Activated CD4-positive, alpha-beta T cell treated with anti-CD3 and anti-CD28 coated beads, Interleukin-2, amount 10 ng/mL, durations not matched to agents 24 days and 14 days (primary cell): ENCODE measurements at regions of chr7 and their contacts with region 1.

Region 1: DNA sequence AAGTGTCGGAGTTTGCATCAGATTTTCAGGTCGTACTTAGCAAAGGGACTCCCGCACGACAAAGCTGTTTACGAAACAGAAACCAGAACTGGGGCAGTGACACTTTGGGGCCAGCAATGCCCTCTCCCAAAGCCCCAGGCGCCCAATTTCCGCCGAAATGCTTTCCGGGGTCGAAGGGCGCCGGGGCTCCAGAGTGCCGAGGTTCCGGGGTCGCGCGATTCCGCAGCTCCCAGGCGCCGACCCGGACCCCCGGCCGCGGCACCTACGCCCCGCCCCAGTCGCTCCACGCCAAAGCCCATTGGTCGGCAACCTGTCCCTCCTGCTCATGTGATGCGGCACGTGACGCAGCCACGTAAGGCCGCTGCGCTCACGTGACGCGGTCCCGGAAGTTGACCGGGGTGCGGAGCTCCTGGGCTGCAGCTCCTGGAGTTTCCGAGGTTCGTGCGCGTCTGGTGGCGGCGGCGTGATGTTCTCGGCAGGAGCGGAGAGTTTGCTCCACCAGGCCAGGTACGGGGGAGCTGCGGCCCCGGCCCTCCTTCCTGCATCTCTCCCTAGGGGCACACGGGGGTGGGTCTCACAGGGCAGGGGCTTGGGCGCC is at the start of gene AP5Z1:
- DNase-seq: peak; percentile 98
- H3K4me3 Mint-ChIP-seq: peak within 1 kb of the TSS; percentile 97
- H3K27ac Mint-ChIP-seq: peak within 1 kb of the TSS; percentile 97
- H3K4me1 Mint-ChIP-seq: peaks cover 36% of the 10 kb centered on the region
- H3K27me3 Mint-ChIP-seq: no peaks in the 10 kb centered on the region
- total RNA-seq, gene AP5Z1: 42.2 and 44.4 TPM in 2 replicates

Region 2: DNA sequence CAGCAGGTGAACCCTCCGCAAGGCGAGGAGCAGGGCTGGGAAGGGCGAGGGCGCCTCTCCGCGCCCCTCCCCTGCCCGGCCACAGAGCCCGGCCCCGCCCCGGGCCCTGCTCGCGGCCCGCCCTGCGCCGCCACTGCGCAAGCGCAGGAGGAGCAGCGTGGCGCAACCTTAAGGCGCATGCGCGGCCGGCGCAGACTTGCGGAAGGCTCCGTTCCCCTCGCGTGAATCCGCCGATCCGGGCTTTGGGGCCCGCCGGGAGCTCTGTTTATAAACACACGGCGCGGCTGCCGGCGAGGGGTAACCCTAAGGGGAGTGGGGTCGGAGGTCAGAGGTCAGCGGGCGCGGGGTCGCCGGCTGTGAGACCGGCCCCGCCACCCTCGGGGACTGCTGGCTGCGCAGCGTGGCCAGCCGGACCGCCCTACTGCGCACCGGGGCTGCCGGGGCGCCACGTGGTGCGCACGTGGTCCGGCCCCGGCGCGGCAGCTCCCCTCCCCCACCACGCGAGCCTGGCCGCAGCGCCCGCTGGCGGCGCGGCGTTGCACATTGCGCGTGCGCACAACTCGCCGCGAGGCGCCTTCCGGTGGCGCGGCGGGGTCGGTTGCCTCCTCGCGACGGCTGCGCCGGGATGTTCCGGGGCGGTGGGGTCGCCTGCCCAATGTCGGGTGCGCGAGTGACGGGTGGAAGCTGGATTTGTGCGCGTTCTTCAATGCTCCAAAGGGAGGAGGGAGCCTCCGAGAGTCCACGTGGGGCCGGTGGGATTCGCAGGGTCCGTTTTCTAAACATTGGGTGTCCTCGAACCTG is 133.5 kb before region 1 on chr7:
- intact Hi-C with region 1: loop called (anchors 1 kb)
- DNase-seq: peak; percentile 99
- H3K4me3 Mint-ChIP-seq: peak overlapping the region; percentile 95
- H3K27ac Mint-ChIP-seq: peak overlapping the region; percentile 95
- H3K4me1 Mint-ChIP-seq: peaks cover 15% of the 10 kb centered on the region
- H3K27me3 Mint-ChIP-seq: no peaks in the 10 kb centered on the region

Region 3: DNA sequence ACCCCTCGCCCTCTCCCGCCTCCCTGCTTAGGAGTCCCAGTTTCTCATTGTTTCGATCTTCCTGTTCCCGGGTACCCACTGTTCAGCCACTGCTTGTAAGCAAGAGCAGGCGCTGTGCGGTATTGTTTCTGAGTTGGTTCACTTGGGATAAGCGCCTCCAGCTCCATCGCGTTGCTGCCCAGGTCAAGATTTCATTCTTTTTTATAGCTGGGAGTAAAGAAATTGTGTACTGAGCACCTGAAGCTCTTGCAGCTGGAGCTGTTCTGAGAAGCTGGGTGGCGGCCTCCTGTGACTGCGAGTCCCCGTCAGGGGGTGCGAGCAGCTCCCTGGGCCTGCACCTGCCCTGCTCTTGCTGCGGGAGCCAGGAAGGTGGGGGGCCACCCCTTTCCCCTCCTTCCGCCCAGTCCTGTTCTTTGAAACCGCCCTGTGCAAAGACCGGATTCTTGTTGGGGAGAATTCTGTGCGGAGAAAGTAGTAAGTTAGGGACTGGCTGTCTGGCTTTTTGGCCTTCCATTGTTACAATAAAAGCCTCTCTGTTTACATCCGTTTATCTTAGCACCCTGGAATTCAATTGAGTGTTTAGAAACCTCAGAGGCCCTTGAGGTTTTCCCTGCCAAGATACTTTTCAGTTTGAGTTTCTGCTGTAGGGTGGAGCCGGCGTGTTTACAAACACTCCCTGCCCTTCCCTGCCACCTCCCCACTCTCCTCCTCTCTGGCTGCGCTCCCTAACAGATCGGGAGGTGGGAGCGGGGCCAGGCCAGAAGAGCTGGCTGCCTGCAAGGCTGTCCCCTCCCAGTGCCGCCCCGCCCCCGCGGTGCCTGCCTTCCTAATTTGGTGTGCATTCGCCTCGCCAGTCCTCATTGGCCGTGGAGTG is 30.7 kb before region 1 on chr7:
- intact Hi-C with region 1: loop called (anchors 1 kb)
- DNase-seq: peak; percentile 95
- H3K4me3 Mint-ChIP-seq: peak overlapping the region; percentile 89
- H3K27ac Mint-ChIP-seq: peak overlapping the region; percentile 94
- H3K4me1 Mint-ChIP-seq: peaks cover 66% of the 10 kb centered on the region
- H3K27me3 Mint-ChIP-seq: no peaks in the 10 kb centered on the region

Region 4: GRCh38 chr7:4791738-4792536 is 16.6 kb after region 1 on chr7:
- intact Hi-C with region 1: loop called (anchors 2 kb)
- DNase-seq: peak; percentile 94
- H3K4me3 Mint-ChIP-seq: no peak overlapping the region
- H3K27ac Mint-ChIP-seq: no peak overlapping the region
- H3K4me1 Mint-ChIP-seq: peaks cover 3% of the 10 kb centered on the region
- H3K27me3 Mint-ChIP-seq: no peaks in the 10 kb centered on the region

Region 5: DNA sequence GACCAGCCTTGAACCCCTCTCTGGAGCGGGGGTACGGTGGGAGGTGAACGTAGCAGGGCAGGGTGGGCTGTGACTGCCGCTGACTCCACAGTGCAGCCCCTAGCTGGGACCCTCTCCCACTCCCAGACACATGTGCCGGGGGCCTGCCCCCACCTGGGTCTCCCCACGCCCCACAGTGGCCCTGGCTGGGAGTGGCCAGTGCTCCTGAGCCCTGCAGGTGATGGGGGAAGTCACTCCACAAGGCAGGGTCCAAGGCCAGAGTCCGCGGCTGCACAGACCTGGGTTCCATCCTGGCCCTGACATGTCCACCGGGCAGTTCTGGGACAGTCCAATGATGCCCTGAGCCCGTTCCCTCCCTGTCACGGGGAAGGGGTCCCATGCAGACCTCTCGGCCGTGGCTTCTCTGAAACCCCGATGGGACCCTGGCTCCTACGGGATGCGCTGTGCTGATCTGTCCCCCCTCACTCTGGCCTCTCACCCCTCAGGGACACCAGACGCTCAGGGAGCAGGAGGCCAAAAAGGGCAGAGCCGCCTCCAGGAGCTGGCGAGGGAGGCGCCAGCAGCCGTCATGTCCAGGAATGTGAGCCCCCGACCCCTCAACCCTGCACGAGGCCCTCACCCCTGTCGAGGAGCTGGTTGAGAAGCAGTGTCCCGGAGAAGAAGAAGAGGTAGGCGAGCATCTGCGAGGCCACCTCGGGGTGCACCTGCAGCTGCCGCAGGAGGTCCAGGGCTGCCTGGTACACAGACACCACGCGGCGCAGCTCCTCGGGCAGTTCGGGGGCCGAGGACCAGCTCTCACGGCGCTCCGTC is 40.5 kb after region 1 on chr7:
- intact Hi-C with region 1: no loop called
- DNase-seq: no peak
- H3K4me3 Mint-ChIP-seq: no peak overlapping the region
- H3K27ac Mint-ChIP-seq: no peak overlapping the region
- H3K4me1 Mint-ChIP-seq: no peaks in the 10 kb centered on the region
- H3K27me3 Mint-ChIP-seq: peaks cover 14% of the 10 kb centered on the region

Region 6: GRCh38 chr7:4973728-4974198 is 198.4 kb after region 1 on chr7:
- intact Hi-C with region 1: loop called (anchors 5 kb)
- DNase-seq: peak; percentile 99
- H3K4me3 Mint-ChIP-seq: peak overlapping the region; percentile 96
- H3K27ac Mint-ChIP-seq: peak overlapping the region; percentile 94
- H3K4me1 Mint-ChIP-seq: peaks cover 12% of the 10 kb centered on the region
- H3K27me3 Mint-ChIP-seq: no peaks in the 10 kb centered on the region

Region 7: DNA sequence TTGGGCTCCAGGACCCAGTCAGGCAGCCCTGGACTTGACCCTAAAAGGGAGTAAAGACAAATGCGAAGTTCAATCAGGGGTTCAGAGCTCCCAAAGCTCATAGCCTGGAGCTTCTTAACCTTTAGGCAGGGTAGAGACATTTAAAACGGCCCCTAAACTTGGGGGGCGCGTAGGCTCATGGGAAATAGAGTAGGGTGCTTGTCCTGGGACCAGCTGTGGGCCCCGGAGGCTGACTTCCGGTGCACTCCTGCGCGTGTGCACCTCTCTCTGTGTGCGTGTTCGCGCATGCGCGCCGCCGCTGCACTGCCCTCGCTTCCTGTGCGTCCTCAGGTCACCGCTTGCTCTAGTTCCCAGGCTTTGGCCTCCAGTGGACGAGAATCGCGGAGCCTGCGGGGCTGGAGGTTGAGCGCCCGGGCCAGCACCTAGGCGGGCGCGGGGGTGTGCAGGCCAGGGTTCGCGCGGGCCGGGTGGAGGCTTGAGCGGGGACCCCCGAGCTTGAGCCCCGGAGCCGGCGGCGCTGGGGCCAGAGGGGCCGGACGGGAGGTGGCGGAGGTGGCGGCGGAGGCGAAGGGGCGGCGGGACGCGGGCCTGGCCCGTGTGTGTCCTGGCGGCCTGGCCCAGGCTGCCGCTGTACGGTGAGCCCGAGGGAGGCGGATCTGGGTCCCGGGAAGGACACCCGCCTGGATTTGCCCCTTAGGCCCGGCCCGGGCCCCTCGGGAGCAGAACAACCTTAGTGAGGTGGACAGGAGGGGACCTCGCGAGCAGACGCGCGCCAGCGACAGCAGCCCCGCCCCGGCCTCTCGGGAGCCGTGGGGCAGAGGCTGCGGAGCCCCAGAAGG is 270.4 kb after region 1 on chr7 and contains the start of gene RBAK:
- intact Hi-C with region 1: loop called (anchors 5 kb)
- DNase-seq: peak; percentile 96
- H3K4me3 Mint-ChIP-seq: peak within 1 kb of the TSS; percentile 94
- H3K27ac Mint-ChIP-seq: peak within 1 kb of the TSS; percentile 91
- H3K4me1 Mint-ChIP-seq: peaks cover 27% of the 10 kb centered on the region
- H3K27me3 Mint-ChIP-seq: no peaks in the 10 kb centered on the region
- total RNA-seq, gene RBAK: 13.6 and 14.2 TPM in 2 replicates